ENCODE measurements at regions of chr17 and their contacts with region 1.

Region 1: DNA sequence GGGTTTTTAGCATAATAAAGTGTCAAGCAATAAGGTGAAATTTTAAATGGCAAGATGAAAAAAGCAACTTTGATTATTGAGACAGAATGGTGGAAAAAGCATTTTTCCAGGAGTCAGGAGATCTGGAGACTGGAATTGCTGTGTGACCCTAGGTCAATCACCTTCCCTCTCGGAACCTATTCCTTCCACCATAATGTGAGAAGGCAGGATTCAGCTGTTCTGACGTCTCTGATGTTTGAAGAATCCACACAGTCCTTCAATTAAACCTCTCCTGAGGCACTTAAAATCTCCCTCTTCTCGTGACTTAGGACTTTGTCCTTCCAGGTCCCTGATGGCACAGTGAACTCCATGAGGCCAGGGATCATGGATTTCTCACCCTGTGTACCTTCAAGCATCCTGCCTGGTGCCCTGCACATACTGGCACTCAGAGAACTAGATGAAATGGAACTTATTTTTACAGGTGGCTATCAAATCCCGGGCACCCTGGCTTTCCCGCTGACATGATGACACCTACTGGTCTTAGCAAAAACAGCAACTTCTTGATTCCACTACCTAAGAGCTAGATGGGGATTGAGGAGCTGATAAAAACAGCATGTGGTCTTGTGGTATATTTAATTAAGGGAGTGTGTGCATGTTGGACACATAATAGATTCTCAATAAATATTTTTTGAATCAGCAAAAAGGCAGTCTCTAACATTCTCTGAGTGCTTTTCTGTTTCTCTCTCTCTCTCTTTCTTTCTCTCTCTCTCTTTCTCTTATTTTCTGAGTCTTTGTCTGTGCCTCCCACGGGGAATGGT is 2.3 kb upstream of the CCDC182 start:
- DNase-seq: peak in 10 of 14 experiments; percentile 8 to 74 (median 22)
- ATAC-seq: peak; percentile 58
- H3K4me3 ChIP-seq: no peak overlapping the region
- H3K4me3 Mint-ChIP-seq: no peak overlapping the region
- H3K27ac ChIP-seq: no peak overlapping the region
- H3K27ac Mint-ChIP-seq: no peak overlapping the region
- H3K4me1 ChIP-seq: no peaks in the 10 kb centered on the region
- H3K4me1 Mint-ChIP-seq: no peaks in the 10 kb centered on the region
- H3K27me3 ChIP-seq: no peaks in the 10 kb centered on the region
- H3K27me3 Mint-ChIP-seq: peaks cover 9% of the 10 kb centered on the region
- CTCF ChIP-seq: peak; percentile 79

Region 2: DNA sequence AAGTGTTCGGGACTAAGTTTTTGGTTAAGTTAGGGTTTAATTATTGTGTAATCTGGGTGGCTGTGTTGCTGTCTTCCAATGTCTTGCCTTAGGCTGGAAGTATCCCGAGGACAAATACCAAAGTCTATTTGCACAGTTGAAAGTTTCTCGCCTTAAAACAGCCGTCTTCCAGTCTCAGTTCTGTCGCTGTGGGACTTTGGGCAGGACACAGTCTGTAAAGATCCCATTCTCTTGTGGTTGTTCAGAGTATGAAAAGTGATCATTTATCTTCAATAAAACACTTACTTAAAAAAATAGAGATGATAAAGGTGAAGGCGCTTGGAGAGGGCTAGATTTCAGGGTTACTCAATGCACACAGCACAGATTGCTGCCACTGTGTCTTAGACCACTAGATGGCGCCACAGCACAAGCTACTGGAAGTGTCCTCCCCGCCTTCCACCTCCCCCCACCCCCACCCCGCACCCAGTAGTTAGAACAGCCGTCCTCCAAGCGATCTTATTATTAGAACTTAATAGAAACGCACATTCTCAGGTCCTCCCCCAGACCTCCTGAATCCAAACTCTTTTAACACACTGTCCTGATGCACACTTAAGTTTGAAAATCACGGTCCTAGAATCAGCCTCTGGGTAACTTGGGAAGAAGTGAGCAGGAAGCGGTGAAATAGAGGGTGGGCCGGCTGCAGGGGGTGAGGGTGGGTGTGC is 616.5 kb before region 1 on chr17:
- CTCF ChIA-PET with region 1: interaction called, 4 read pairs
- POLR2A ChIA-PET with region 1: no interaction called
- intact Hi-C with region 1: loop called (anchors 1 kb)
- DNase-seq: peak; percentile 72 to 91 (median 80)
- ATAC-seq: peak; percentile 97
- H3K4me3 ChIP-seq: no peak overlapping the region
- H3K4me3 Mint-ChIP-seq: no peak overlapping the region
- H3K27ac ChIP-seq: no peak overlapping the region
- H3K27ac Mint-ChIP-seq: no peak overlapping the region
- H3K4me1 ChIP-seq: peaks cover 4% of the 10 kb centered on the region
- H3K4me1 Mint-ChIP-seq: peaks cover 11% of the 10 kb centered on the region
- H3K27me3 ChIP-seq: no peaks in the 10 kb centered on the region
- H3K27me3 Mint-ChIP-seq: no peaks in the 10 kb centered on the region
- CTCF ChIP-seq: peak; percentile 77

Region 3: DNA sequence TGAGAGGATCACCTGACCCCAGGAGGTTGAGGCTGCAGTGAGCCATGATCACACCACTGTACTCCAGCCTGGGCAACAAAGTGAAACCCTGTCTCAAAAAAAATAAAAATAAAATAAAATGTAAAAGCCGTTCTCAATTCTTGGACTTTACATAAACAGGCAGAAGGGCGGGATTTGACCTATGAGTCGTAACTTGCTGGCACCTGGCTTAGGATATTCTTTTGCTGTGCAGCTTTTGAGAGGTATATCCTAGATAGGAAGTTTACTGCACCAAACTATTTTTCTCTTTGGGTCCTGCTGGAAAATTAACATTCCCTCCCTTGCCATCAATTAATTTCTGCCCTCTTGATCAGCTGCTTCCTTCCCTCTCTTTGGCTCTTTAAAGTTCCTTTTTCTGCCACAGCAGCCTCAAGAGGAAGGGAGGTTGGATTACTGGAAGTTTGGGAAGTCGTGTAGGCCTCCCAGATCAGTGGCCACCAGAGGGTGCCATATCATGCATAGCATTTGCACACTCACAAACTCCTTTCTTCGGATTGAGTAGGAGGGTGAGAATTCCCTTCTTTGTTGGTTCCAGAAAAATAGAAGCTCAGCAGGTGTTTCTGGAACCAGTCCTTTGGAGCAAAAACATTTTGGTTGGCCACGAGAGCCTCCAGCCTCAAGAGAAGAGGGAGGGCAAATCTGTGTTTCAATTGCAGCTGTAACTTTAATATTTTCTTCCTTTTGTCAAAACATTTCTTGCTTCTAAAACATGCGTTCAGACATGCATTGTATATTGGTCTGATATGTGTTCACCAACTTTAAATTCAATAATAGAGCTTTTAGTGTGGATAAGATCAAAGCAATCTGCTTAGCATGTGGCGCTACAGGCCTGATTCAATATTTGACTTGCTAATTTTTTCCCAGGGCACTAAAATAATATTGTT is 149.6 kb before region 1 on chr17:
- CTCF ChIA-PET with region 1: no interaction called
- POLR2A ChIA-PET with region 1: no interaction called
- intact Hi-C with region 1: loop called in 1 of 2 experiments (anchors 2 kb)
- DNase-seq: peak in 8 of 14 experiments; percentile 10 to 62 (median 34)
- ATAC-seq: no peak
- H3K4me3 ChIP-seq: no peak overlapping the region
- H3K4me3 Mint-ChIP-seq: no peak overlapping the region
- H3K27ac ChIP-seq: no peak overlapping the region
- H3K27ac Mint-ChIP-seq: peak overlapping the region; percentile 87
- H3K4me1 ChIP-seq: peaks cover 55% of the 10 kb centered on the region
- H3K4me1 Mint-ChIP-seq: peaks cover 61% of the 10 kb centered on the region
- H3K27me3 ChIP-seq: no peaks in the 10 kb centered on the region
- H3K27me3 Mint-ChIP-seq: no peaks in the 10 kb centered on the region
- CTCF ChIP-seq: peak; percentile 80

Region 4: DNA sequence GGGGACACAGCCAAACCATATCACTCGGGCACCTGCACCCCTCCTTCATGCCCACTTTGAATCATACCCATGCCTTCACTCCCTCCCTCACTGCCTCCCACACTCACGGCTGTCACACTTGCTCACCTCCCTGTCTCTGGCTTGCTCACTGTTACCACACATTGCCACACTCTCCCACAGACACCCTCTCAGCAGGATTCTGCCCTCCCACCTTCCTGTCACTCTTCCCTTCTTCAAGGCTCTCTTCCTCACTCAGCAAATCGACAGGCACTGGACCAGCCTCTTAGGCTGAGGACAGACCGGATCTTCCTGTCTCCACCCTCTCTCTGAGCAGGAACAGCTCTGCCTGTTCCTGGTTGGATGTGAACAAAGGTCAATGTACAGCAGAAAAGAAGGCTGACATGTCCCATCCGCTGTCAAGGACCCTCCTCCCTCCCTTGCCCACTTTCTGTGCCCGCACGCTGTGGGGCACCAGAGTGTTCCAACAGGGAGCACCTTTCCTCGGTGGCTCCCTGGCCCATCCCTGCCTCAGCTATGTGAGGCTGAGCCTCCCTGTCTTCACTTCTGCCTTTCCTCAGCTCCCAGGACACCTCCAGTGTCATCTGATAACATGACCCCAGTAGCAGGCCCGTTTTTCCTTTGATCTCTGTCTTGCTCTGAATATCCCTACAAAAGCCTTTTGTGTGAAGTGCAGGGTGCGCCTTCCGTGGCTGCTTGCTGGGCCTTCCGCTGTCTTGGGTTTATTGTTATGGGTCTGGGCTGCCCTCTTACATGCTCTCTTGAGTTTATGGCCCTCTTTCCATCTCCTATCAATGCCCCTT is 49.3 kb before region 1 on chr17:
- CTCF ChIA-PET with region 1: no interaction called
- POLR2A ChIA-PET with region 1: no interaction called
- intact Hi-C with region 1: no loop called
- DNase-seq: peak in 1 of 14 experiments; percentile 15
- ATAC-seq: no peak
- H3K4me3 ChIP-seq: no peak overlapping the region
- H3K4me3 Mint-ChIP-seq: no peak overlapping the region
- H3K27ac ChIP-seq: no peak overlapping the region
- H3K27ac Mint-ChIP-seq: no peak overlapping the region
- H3K4me1 ChIP-seq: peaks cover 14% of the 10 kb centered on the region
- H3K4me1 Mint-ChIP-seq: no peaks in the 10 kb centered on the region
- H3K27me3 ChIP-seq: no peaks in the 10 kb centered on the region
- H3K27me3 Mint-ChIP-seq: no peaks in the 10 kb centered on the region
- CTCF ChIP-seq: no peak

Region 5: GRCh38 chr17:57833179-57833939 is 85.9 kb after region 1 on chr17:
- CTCF ChIA-PET with region 1: no interaction called
- POLR2A ChIA-PET with region 1: no interaction called
- intact Hi-C with region 1: loop called in 1 of 2 experiments (anchors 5 kb)
- DNase-seq: peak; percentile 43 to 86 (median 58)
- ATAC-seq: peak; percentile 85
- H3K4me3 ChIP-seq: peak overlapping the region; percentile 46
- H3K4me3 Mint-ChIP-seq: no peak overlapping the region
- H3K27ac ChIP-seq: no peak overlapping the region
- H3K27ac Mint-ChIP-seq: no peak overlapping the region
- H3K4me1 ChIP-seq: peaks cover 6% of the 10 kb centered on the region
- H3K4me1 Mint-ChIP-seq: peaks cover 6% of the 10 kb centered on the region
- H3K27me3 ChIP-seq: no peaks in the 10 kb centered on the region
- H3K27me3 Mint-ChIP-seq: no peaks in the 10 kb centered on the region
- CTCF ChIP-seq: peak; percentile 96

Measured in CD4-positive, alpha-beta T cell (primary cell).